ENCODE measurements at regions of chr2 and their contacts with region 1.

Region 1: GRCh38 chr2:38750891-38751595 is at the start of gene SRSF7:
- DNase-seq: peak; percentile 92 to 94
- H3K4me3 ChIP-seq: peak within 1 kb of the TSS; percentile 93
- H3K27ac ChIP-seq: peak within 1 kb of the TSS; percentile 88
- H3K4me1 ChIP-seq: peaks cover 27% of the 10 kb centered on the region
- H3K27me3 ChIP-seq: no peaks in the 10 kb centered on the region
- CTCF ChIP-seq: no peak
- total RNA-seq, gene SRSF7: 110 and 111 TPM in 2 replicates

Region 2: DNA sequence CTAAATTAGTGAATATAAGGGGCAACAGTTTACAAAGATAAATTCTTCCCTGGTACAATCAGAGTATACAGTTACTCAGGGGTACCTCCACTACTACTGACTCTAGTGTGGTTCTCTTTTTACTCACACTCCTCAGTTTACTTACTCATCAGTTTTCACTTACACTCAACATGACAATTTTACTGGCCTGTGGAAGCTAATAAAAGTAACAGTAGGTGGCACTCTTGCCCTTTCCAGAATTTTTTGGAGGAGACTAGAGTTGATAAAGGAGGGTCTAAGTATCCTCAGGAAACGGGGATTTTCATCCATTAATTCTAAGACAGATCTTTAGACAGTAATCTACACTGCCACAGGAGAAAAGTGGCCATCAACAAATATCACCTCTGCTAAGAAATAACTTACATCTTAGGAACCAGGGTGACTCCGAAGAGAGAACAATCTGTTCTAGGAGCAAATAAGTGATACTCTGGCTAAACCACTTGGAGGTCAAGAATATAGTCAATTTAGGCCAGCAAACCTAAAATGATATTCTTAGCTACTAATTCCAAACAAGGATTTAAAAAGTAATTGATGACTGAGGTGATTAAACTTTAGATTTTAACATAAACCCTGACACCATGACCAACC is 435.2 kb before region 1 on chr2:
- CTCF ChIA-PET with region 1: no interaction called
- POLR2A ChIA-PET with region 1: interaction called, 11 read pairs
- intact Hi-C with region 1: no loop called
- DNase-seq: peak; percentile 23 to 55
- H3K4me3 ChIP-seq: no peak overlapping the region
- H3K27ac ChIP-seq: 0 out of 2 replicates have a peak overlapping the region, but pooled peaks have one; percentile 1
- H3K4me1 ChIP-seq: no peaks in the 10 kb centered on the region
- H3K27me3 ChIP-seq: no peaks in the 10 kb centered on the region
- CTCF ChIP-seq: peak; percentile 90

Region 3: DNA sequence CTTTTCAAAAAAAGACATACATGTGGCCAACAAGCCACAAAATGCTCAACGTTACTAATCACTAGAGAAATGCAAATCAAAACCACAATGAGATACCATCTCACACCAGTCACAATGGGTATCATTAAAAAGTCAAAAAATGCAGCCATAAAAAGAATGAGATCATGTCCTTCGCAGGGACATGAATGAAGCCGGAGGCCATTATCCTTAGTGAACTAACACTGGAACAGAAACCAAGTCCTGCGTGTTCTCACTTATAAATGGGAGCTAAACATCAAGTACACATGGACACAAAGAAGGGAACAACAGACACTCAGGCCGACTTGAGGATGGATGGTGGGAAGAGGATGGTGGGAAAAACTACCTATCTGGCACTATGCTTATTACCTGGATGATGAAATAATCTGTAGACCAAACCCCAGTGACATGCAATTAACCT is 356.1 kb before region 1 on chr2:
- CTCF ChIA-PET with region 1: interaction called, 17 read pairs
- POLR2A ChIA-PET with region 1: no interaction called
- intact Hi-C with region 1: no loop called
- DNase-seq: peak; percentile 37 to 96
- H3K4me3 ChIP-seq: no peak overlapping the region; the same call in 1 of the 2 replicates
- H3K27ac ChIP-seq: peak overlapping the region; percentile 81
- H3K4me1 ChIP-seq: peaks cover 33% of the 10 kb centered on the region
- H3K27me3 ChIP-seq: no peaks in the 10 kb centered on the region
- CTCF ChIP-seq: no peak

Region 4: DNA sequence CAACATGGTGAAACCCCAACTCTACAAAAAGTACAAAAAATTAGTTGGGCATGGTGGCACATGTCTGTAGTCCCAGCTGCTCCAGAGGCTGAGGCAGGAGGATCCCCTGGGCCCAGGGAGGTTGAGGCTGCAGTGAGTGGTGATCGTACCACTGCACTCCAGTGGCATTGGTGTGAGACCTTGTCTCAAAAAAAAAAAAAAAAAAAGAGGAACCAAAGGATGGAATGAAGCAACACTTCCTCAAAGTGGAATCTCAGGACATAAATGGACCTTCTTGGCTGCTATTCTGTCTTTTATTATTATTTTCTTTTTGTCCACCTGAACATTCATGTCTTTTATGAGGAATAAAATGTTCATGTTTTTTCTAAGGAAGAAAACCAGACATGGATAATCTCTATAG is 40.7 kb after region 1 on chr2:
- CTCF ChIA-PET with region 1: no interaction called
- POLR2A ChIA-PET with region 1: interaction called, 14 read pairs
- intact Hi-C with region 1: no loop called
- DNase-seq: no peak
- H3K4me3 ChIP-seq: no peak overlapping the region
- H3K27ac ChIP-seq: no peak overlapping the region
- H3K4me1 ChIP-seq: no peaks in the 10 kb centered on the region
- H3K27me3 ChIP-seq: no peaks in the 10 kb centered on the region
- CTCF ChIP-seq: no peak

Region 5: DNA sequence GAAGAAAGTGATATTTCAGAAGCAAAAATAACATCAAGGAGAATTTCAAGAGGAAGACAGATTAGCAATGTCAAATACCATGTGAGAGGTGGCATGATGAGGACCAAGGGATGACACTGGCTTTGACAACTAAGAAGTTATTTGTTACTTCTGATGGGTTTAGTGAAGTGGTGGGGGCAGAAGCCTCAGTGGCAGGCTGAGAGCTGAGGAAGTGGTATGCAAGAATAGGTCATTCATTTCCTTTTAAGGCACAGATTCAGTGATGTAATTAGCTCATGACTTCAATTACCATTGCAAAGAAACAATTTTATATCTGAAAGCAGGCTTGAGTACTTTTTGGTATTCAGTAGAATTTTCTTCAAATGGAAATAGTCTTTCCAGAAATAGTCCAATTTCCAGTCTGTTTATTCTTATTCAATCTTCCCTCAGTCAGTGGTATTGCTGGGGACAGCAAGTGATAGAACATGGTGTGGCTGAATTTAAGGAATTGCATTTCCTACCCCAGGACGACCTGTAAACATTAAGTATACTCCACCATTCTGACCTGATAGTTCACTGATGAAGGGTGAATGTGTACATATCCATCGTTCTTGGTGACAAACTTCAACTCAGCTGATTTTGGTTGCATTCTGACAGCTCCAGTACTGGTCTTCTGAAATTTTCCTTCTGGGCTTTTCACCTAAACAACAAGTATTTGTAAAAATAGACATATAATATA is 55.1 kb after region 1 on chr2:
- CTCF ChIA-PET with region 1: interaction called, 5 read pairs
- POLR2A ChIA-PET with region 1: interaction called, 10 read pairs
- intact Hi-C with region 1: no loop called
- DNase-seq: no peak
- H3K4me3 ChIP-seq: no peak overlapping the region
- H3K27ac ChIP-seq: no peak overlapping the region
- H3K4me1 ChIP-seq: no peaks in the 10 kb centered on the region
- H3K27me3 ChIP-seq: no peaks in the 10 kb centered on the region
- CTCF ChIP-seq: no peak

Region 6: GRCh38 chr2:39141331-39142271 is 390.6 kb after region 1 on chr2:
- CTCF ChIA-PET with region 1: no interaction called
- POLR2A ChIA-PET with region 1: interaction called, 11 read pairs
- intact Hi-C with region 1: no loop called
- DNase-seq: peak; percentile 44 to 61
- H3K4me3 ChIP-seq: no peak overlapping the region
- H3K27ac ChIP-seq: no peak overlapping the region
- H3K4me1 ChIP-seq: peaks cover 39% of the 10 kb centered on the region
- H3K27me3 ChIP-seq: no peaks in the 10 kb centered on the region
- CTCF ChIP-seq: no peak

Region 7: GRCh38 chr2:39488450-39488849 is 737.4 kb after region 1 on chr2:
- CTCF ChIA-PET with region 1: no interaction called
- POLR2A ChIA-PET with region 1: no interaction called
- intact Hi-C with region 1: no loop called
- DNase-seq: peak; percentile 56 to 80
- H3K4me3 ChIP-seq: no peak overlapping the region
- H3K27ac ChIP-seq: peak overlapping the region; percentile 38
- H3K4me1 ChIP-seq: peaks cover 51% of the 10 kb centered on the region
- H3K27me3 ChIP-seq: no peaks in the 10 kb centered on the region
- CTCF ChIP-seq: no peak

Measured in PC-9 (cell line).